Activated naive CD4-positive, alpha-beta T cell treated with anti-CD3 and anti-CD28 coated beads for 36 hours (primary cell): ENCODE measurements at regions of chr3 and their contacts with region 1.

Region 1: GRCh38 chr3:16884084-16884747 is 539 bp upstream of the PLCL2 start:
- DNase-seq: peak; percentile 80
- H3K4me3 Mint-ChIP-seq: peak overlapping the region; percentile 86
- H3K27ac Mint-ChIP-seq: peak overlapping the region; percentile 95
- H3K4me1 Mint-ChIP-seq: peaks cover 14% of the 10 kb centered on the region
- H3K27me3 Mint-ChIP-seq: no peaks in the 10 kb centered on the region

Region 2: DNA sequence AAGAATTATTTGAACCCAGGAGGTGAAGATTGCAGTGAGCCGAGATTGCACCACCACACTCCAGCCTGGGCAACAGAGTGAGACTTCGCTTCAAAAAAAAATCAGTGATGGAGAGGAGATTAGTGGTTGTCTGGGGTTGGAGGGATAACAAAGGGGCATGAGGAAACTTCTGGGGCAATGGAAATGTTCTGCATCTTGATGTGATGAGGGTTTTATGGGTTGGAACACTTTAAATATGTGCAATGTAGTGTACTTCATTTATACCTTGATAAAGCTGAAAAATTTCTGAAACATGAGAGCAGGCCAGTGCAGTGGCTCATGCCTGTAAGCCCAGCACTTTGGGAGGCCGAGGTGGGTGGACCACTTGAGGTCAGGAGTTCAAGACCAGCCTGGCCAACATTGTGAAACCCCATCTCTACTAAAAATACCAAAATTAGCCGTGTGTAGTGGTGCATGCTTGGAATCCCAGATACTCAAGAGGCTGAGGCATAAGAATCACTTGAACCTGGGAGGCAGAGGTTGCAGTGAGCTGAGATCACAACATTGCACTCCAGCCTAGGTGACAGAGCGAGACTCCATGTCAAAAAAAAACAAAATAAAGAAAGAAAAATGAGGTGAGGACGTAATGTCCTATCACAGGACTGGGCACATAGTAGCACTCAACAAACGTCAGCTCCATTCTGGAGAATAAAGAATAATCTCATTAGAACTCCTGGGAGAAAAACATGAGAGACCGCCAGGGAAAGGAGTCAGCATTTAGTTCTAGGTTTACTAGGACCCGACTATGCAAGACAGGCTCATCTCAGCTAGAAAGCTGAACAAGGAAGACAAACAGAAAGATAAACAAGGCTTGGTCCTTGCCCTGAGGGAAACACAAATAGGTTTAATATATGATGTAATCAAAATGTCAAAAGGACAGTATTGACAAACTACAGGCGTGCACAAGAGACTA is 394.6 kb before region 1 on chr3:
- CTCF ChIA-PET with region 1: no interaction called
- intact Hi-C with region 1: no loop called
- DNase-seq: no peak
- H3K4me3 Mint-ChIP-seq: no peak overlapping the region
- H3K27ac Mint-ChIP-seq: no peak overlapping the region
- H3K4me1 Mint-ChIP-seq: peaks cover 42% of the 10 kb centered on the region
- H3K27me3 Mint-ChIP-seq: no peaks in the 10 kb centered on the region

Region 3: DNA sequence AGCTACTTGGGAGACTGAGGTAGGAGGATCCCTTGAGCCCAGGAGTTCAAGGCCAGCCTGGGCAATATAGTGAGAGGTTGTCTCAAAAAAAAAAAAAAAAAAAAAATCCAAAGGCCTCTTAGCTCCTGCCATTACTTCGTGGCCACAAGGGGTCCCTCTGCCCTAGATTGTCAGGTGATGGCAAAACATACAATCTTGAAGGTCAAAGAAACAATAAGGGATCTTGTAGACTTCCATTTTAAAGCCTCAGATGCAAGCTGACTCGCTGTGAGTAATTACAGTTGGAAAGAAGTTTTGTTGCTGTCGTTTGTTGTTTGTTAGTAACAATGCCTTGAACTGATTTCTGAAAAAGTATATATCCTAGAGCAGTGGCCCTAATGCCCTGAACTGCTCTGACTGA is 55.4 kb before region 1 on chr3:
- CTCF ChIA-PET with region 1: interaction called, 6 read pairs
- intact Hi-C with region 1: loop called (anchors 1 kb)
- DNase-seq: peak; percentile 75
- H3K4me3 Mint-ChIP-seq: no peak overlapping the region
- H3K27ac Mint-ChIP-seq: no peak overlapping the region
- H3K4me1 Mint-ChIP-seq: peaks cover 18% of the 10 kb centered on the region
- H3K27me3 Mint-ChIP-seq: no peaks in the 10 kb centered on the region

Region 4: DNA sequence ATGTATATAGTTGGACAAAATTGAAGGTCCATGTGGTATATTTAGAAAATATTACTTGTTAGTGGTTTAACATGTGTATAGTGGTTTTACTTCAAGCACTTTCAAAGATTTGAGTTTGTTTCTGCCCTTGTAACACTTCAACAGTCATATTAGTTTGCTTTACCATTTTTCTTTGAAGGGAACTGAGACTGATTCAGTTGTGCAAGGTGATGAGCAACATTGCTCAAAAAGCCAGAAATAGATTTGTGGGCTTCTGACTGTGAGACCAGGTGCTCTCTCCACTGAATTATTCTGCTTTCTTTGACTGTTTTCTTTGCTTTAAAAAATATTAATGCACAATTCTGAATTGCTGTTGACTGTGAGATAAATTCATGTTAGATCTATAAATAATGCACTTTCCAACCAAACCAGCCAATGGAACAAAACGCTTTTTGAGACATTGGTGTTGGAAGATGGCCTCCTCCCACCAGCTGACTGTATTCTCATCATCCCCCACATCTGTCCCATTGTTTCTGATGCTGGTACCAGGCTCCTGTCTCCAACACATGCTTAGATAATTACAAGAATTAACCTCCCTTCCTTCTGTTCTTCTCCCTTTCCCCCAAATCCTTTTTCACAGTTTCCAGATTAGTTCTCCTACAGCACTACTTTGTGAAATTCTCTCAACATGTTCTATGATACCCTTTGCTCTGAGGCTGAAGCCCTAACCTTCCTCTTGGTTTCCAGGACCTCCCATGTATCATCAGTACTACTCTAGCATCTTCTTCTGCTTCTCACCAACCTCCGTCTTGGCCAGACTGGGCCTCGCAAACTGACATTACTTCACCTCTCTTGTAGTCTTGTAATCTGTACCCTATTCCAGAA is 28.4 kb after region 1 on chr3:
- CTCF ChIA-PET with region 1: interaction called, 3 read pairs
- intact Hi-C with region 1: loop called (anchors 1 kb)
- DNase-seq: no peak
- H3K4me3 Mint-ChIP-seq: no peak overlapping the region
- H3K27ac Mint-ChIP-seq: peak overlapping the region; percentile 57
- H3K4me1 Mint-ChIP-seq: peaks cover 77% of the 10 kb centered on the region
- H3K27me3 Mint-ChIP-seq: no peaks in the 10 kb centered on the region

Region 5: GRCh38 chr3:17032407-17033034 is 148.3 kb after region 1 on chr3:
- CTCF ChIA-PET with region 1: interaction called, 7 read pairs
- intact Hi-C with region 1: loop called (anchors 1 kb)
- DNase-seq: no peak
- H3K4me3 Mint-ChIP-seq: no peak overlapping the region
- H3K27ac Mint-ChIP-seq: no peak overlapping the region
- H3K4me1 Mint-ChIP-seq: peaks cover 75% of the 10 kb centered on the region
- H3K27me3 Mint-ChIP-seq: no peaks in the 10 kb centered on the region

Region 6: DNA sequence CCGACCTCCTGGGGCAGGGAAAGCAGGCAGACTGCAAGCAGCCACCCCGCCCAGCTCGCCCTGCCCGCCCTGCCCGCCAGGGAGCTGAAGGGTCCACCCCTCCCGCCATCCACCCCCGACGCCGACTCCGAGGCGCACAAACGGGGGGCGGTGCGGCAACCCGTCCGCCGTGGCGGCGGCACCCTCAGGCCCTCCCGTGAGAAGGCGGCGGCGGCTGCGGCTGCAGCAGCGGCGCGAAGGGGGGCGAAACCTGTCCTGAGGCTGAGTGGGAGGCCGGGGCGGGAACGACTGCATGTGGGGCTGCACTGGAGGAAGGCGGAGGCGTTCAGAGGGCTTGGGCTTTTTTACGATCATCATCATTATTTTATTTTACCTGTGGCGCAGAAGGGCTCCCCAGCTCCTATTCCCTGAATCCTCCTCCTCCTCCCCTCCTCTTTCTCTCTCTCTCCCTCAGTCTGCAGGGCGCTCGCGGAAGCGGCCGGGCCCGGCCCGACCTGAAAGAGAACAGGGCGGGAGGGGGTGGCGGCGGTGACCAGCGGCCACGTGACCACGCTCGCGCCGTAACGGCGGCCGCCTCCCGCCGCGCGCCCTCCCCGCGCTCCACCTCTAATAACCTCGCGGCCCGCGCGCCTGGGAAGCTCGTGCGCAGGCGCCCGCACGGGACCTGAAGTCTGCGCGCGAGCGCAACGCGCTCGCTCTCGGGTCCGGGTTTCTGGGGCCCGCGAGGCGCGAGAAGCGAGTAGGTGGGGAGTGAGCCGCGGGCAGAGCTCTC is 858.1 kb after region 1 on chr3 and contains the start of gene TBC1D5:
- CTCF ChIA-PET with region 1: no interaction called
- intact Hi-C with region 1: loop called (anchors 10 kb)
- DNase-seq: peak; percentile 95
- H3K4me3 Mint-ChIP-seq: peak within 1 kb of the TSS; percentile 92
- H3K27ac Mint-ChIP-seq: peak within 1 kb of the TSS; percentile 94
- H3K4me1 Mint-ChIP-seq: peaks cover 40% of the 10 kb centered on the region
- H3K27me3 Mint-ChIP-seq: no peaks in the 10 kb centered on the region
- total RNA-seq, gene TBC1D5: 54.4 to 57.2 TPM